ENCODE measurements at regions of chr2 and their contacts with region 1.

Region 1: DNA sequence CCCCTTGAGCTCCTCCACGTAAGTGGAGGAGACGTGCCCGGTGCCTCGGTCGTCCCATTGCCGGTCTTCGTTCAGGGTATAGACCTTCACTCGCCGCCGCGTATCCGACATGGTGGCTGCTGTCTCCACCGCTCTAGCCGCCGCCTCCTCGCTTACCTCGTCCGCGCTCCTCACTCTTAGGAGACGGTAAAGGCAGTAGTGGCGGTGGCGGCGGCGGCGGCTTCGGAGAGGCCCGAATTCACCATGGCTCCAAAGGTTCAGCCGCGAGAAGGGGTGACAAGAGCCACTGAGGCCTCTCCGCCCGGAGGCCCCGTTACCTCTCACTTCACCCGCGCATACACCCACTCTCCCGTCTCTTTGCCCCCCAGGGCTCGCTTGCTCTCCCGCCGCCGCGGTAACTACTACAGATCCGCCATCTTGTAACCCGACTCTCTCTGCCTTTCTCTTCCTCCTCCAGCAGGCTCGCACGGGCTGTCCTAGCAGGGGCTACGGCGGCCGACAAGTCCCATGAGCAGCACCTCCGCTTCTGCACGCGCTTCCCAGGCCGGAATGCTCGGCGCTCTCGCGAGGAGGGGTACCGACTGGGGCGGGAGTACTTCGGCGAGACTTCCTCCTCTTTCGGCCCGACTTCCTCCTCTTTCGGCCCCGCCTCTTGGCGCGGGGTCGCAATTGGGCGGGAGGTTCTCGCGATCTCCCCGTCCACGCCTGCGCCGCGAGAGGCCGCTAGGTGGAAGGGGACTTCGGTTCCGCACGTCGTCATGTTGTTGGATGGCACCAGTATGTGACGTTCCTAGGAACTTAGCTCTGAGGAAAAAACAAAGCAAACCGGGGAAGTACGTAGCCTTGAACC is at the start of gene PPP4R3B:
- DNase-seq: peak; percentile 89 to 99 (median 94)
- ATAC-seq: peak; percentile 86
- H3K4me3 ChIP-seq: peak within 1 kb of the TSS; percentile 98
- H3K27ac ChIP-seq: peak within 1 kb of the TSS; percentile 99
- H3K4me1 ChIP-seq: peaks cover 6 to 8% of the 10 kb centered on the region in 2 experiments; a peak in 4 of 5 replicates
- H3K27me3 ChIP-seq: no peaks in the 10 kb centered on the region
- CTCF ChIP-seq: peak; percentile 21 to 49 (median 48); a peak in 3 of 6 replicates
- EP300 ChIP-seq: no peak
- POLR2A ChIP-seq: peak; percentile 95
- RAD21 ChIP-seq: no peak
- polyA plus RNA-seq, gene PPP4R3B: 13.2 to 15.7 TPM

Region 2: DNA sequence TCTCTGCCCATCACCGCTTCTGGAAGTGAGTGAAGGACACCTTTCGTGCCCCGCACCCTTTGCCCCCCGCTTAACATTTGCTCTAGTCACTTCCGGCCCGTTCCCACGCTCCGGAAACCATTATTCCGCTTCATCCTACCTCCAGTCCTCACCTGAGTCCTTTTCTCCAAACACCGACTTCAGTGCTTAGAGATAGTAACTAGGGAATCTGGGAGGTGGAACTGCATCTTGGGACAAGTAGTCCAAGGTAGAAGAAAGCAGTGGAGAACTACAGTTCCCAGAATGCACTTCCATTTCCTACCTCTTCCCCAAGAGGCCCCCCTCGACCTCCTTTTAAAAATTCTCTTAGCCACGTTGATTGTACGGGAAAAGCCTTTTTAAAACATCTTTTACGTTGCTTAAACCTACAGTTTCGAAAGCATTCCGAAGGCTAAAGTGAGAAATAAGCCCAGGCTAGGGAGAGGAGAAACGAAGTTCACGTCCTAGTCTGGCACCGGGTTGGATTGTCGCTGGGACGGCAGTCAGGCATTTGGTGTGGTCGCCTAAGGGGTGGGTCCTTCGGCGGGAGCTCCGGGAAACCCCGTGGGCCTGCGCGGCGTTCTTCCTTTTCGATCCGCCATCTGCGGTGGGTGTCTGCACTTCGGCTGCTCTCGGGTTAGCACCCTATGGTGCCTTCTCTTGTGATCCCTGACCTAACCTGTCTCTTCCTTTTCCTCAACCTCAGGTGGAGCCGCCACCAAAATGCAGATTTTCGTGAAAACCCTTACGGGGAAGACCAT is 385.1 kb before region 1 on chr2 and contains the starts of genes CLHC1 and RPS27A:
- CTCF ChIA-PET with region 1: no interaction called
- POLR2A ChIA-PET with region 1: no interaction called
- in situ Hi-C with region 1: no loop called
- intact Hi-C with region 1: loop called (anchors 2 kb)
- DNase-seq: peak; percentile 88 to 95 (median 89)
- ATAC-seq: peak; percentile 85
- H3K4me3 ChIP-seq: peak within 1 kb of the TSS; percentile 79
- H3K27ac ChIP-seq: peak within 1 kb of the TSS; percentile 99
- H3K4me1 ChIP-seq: peaks cover 21 to 37% of the 10 kb centered on the region in 2 experiments
- H3K27me3 ChIP-seq: no peaks in the 10 kb centered on the region
- CTCF ChIP-seq: no peak
- EP300 ChIP-seq: peak; percentile 12; the same call in 1 of the 2 replicates
- POLR2A ChIP-seq: peak; percentile 99
- RAD21 ChIP-seq: 0 out of 4 replicates have a peak, but pooled peaks have one; percentile 3 to 4
- polyA plus RNA-seq, gene CLHC1: 3.7 to 4.6 TPM
- polyA plus RNA-seq, gene RPS27A: 2,423 to 2,945 TPM

Region 3: GRCh38 chr2:55282110-55282917 is 335.1 kb before region 1 on chr2:
- CTCF ChIA-PET with region 1: no interaction called
- POLR2A ChIA-PET with region 1: no interaction called
- in situ Hi-C with region 1: no loop called
- intact Hi-C with region 1: loop called (anchors 5 kb)
- DNase-seq: peak; percentile 78 to 91 (median 81)
- ATAC-seq: peak; percentile 95
- H3K4me3 ChIP-seq: peak overlapping the region; percentile 66
- H3K27ac ChIP-seq: peak overlapping the region; percentile 91
- H3K4me1 ChIP-seq: peaks cover 7 to 9% of the 10 kb centered on the region in 2 experiments; a peak in 3 of 5 replicates
- H3K27me3 ChIP-seq: no peaks in the 10 kb centered on the region
- CTCF ChIP-seq: no peak
- EP300 ChIP-seq: no peak
- POLR2A ChIP-seq: peak; percentile 95
- RAD21 ChIP-seq: no peak; a peak in 1 of 4 replicates

Region 4: DNA sequence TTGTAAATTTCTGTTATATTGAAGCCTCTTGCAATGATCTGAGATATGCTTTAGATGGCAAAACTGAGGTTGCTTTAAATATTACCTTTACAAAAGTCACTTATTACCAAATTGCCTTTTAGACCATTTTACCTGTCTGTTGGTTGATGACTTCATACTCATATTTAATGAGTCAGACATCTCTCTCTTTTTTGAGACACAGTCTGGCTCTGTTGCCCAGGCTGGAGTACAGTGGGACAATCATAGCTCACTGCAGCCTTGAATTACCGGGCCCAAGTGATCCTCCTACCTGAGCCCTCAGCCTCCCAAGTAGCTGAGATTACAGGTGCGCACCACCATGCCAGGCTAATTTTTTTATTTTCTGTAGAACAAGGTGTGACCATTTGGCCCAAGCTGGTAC is 11.5 kb after region 1 on chr2:
- CTCF ChIA-PET with region 1: interaction called, 4 read pairs
- POLR2A ChIA-PET with region 1: interaction called, 11 read pairs
- in situ Hi-C with region 1: no loop called
- intact Hi-C with region 1: no loop called
- DNase-seq: no peak
- ATAC-seq: no peak
- H3K4me3 ChIP-seq: no peak overlapping the region
- H3K27ac ChIP-seq: no peak overlapping the region
- H3K4me1 ChIP-seq: peaks cover 4 to 22% of the 10 kb centered on the region in 2 experiments; a peak in 3 of 5 replicates
- H3K27me3 ChIP-seq: no peaks in the 10 kb centered on the region
- CTCF ChIP-seq: no peak
- EP300 ChIP-seq: no peak
- POLR2A ChIP-seq: no peak
- RAD21 ChIP-seq: no peak

Region 5: DNA sequence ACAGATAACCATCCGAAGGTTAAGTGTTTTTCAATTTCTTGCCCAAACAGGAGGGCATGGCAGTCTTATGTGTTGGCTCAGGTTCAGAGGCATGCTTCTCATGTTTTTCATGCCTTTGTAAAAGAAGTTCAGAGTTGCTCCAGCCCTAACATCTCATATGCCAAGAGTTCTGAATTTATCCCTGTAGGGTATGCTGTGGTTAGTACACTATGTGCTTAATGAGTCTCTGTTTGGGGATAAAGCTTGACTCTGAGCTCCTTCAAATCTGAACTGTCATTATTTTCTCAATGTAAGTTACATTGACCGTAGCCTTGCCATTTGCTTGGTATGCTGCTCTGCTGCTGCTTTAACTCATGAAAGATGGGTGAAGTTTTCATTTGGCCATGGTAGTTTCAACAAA is 144.1 kb after region 1 on chr2:
- CTCF ChIA-PET with region 1: no interaction called
- POLR2A ChIA-PET with region 1: no interaction called
- in situ Hi-C with region 1: no loop called
- intact Hi-C with region 1: no loop called
- DNase-seq: no peak
- ATAC-seq: no peak
- H3K4me3 ChIP-seq: no peak overlapping the region
- H3K27ac ChIP-seq: no peak overlapping the region
- H3K4me1 ChIP-seq: no peaks in the 10 kb centered on the region
- H3K27me3 ChIP-seq: peaks cover 0 to 2% of the 10 kb centered on the region in 2 experiments; a peak in 1 of 5 replicates
- CTCF ChIP-seq: no peak
- EP300 ChIP-seq: no peak
- POLR2A ChIP-seq: no peak
- RAD21 ChIP-seq: no peak

Region 6: GRCh38 chr2:55843096-55843993 is 225.9 kb after region 1 on chr2:
- CTCF ChIA-PET with region 1: no interaction called
- POLR2A ChIA-PET with region 1: no interaction called
- in situ Hi-C with region 1: no loop called
- intact Hi-C with region 1: no loop called
- DNase-seq: peak in 1 of 4 experiments; percentile 19
- ATAC-seq: peak; percentile 73
- H3K4me3 ChIP-seq: no peak overlapping the region
- H3K27ac ChIP-seq: peak overlapping the region; percentile 47; the same call in 1 of the 3 replicates
- H3K4me1 ChIP-seq: peaks cover 0 to 6% of the 10 kb centered on the region in 2 experiments; a peak in 1 of 5 replicates
- H3K27me3 ChIP-seq: no peaks in the 10 kb centered on the region
- CTCF ChIP-seq: no peak
- EP300 ChIP-seq: peak; percentile 44; the same call in 1 of the 2 replicates
- POLR2A ChIP-seq: no peak
- RAD21 ChIP-seq: no peak